ENCODE measurements at regions of chr14 and their contacts with region 1.

Region 1: DNA sequence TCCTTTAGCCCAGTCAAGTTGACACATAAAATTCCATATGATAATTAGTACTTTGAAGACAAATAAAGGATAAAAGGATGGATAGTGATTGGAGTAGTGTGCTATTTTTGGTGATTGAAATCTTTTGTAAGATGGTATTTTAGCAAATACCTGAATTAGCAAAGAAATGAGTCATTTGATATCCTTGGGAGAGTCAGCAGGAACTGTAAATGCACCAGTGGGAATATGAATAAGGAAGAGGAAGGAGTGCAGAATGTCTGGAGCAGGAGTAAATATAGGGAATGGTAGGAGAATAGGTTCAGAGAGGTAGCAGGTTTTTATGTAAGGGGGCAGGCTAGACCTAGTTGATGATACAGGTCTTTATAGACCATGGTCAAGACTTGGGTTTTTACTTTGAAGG is 75.0 kb downstream of the TRMT5 start:
- DNase-seq: no peak
- H3K4me3 ChIP-seq: no peak overlapping the region
- H3K27ac ChIP-seq: no peak overlapping the region
- H3K4me1 ChIP-seq: no peaks in the 10 kb centered on the region
- H3K27me3 ChIP-seq: no peaks in the 10 kb centered on the region
- CTCF ChIP-seq: no peak

Region 2: GRCh38 chr14:60867503-60868172 is 38.3 kb before region 1 on chr14:
- CTCF ChIA-PET with region 1: interaction called, 15 read pairs
- POLR2A ChIA-PET with region 1: no interaction called
- intact Hi-C with region 1: no loop called
- DNase-seq: no peak
- H3K4me3 ChIP-seq: no peak overlapping the region
- H3K27ac ChIP-seq: no peak overlapping the region
- H3K4me1 ChIP-seq: peaks cover 27% of the 10 kb centered on the region
- H3K27me3 ChIP-seq: no peaks in the 10 kb centered on the region
- CTCF ChIP-seq: no peak

Region 3: GRCh38 chr14:61196792-61197191 is 290.9 kb after region 1 on chr14:
- CTCF ChIA-PET with region 1: interaction called, 11 read pairs
- POLR2A ChIA-PET with region 1: no interaction called
- intact Hi-C with region 1: no loop called
- DNase-seq: peak; percentile 36
- H3K4me3 ChIP-seq: no peak overlapping the region
- H3K27ac ChIP-seq: no peak overlapping the region
- H3K4me1 ChIP-seq: peaks cover 6% of the 10 kb centered on the region
- H3K27me3 ChIP-seq: no peaks in the 10 kb centered on the region
- CTCF ChIP-seq: peak; percentile 49

Region 4: DNA sequence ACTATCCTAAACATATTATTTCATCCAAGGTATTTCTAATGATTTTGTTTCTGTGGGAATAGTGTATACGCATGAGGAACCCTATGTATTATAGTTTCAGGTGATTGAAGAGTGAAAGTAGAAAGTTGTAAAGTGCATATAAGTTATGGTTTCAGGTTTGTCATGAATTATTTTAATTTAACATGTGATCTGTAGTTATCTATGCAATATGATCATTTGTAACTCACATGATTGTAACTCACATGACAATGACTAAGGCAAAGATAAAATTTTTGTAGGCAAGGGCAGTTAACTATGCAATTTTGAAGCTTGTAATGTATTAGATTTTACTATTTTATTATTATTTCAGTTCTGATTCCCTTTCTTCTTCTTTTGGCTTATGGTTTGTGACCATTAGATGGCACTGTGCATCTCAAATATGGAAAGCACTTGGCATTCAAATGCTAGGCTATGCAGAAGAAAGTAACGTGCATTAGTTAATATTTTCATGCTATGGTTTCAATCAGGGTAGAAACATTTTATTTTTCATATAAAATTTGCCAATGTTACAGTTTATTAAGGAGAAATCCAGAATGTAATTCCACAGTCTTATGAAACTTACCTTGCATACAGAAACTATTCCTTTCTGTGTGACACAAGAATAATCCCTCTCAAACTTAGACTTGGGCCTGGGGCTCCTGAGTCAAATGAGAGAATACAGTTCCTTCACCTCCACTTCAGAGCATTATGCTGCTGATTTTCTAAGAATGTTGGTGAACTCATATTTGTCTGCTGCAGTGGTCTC is 391.0 kb after region 1 on chr14:
- CTCF ChIA-PET with region 1: no interaction called
- POLR2A ChIA-PET with region 1: no interaction called
- intact Hi-C with region 1: no loop called
- DNase-seq: peak; percentile 55
- H3K4me3 ChIP-seq: no peak overlapping the region
- H3K27ac ChIP-seq: no peak overlapping the region
- H3K4me1 ChIP-seq: no peaks in the 10 kb centered on the region
- H3K27me3 ChIP-seq: no peaks in the 10 kb centered on the region
- CTCF ChIP-seq: peak; percentile 81

Measured in A673 (cell line).